ENCODE measurements at regions of chr7 and their contacts with region 1.

Region 1: DNA sequence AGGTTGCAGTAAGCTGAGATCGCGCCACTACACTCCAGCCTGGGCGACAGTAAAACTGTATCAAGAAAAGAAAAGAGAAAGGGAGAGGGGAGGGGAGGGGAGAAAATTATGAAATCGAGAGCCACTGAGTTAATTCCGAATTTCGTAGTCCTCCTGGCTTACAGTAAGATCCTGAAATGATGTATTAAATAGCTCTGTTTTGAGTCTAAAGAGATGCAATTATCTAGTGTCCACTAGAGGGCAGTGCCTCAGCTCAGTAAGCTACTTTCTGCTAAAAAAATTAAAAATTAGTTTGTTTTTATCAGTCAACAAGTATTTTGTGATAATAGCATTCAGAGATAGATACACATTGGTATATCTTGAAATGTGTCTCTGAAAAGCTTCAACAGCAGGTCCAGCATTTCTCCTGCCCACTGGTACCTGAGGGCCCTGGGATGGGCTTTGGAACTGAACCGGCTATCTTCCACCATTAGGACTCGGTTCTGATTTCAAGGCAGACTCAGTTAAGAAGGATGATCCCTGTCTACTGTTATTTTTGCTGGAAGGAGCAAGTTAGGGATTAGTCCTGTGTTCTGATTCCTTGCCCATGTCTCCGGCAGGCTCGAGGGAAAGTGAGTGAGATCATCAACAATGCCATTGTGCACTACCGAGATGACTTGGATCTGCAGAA is 19.5 kb downstream of the TSPAN33 start:
- DNase-seq: peak in 1 of 2 experiments; percentile 25
- H3K4me3 ChIP-seq: no peak overlapping the region
- H3K4me3 Mint-ChIP-seq: no peak overlapping the region
- H3K27ac Mint-ChIP-seq: no peak overlapping the region
- H3K4me1 ChIP-seq: no peaks in the 10 kb centered on the region
- H3K4me1 Mint-ChIP-seq: no peaks in the 10 kb centered on the region
- H3K27me3 ChIP-seq: no peaks in the 10 kb centered on the region
- H3K27me3 Mint-ChIP-seq: peaks cover 2% of the 10 kb centered on the region
- CTCF ChIP-seq: peak; percentile 74 to 85

Region 2: DNA sequence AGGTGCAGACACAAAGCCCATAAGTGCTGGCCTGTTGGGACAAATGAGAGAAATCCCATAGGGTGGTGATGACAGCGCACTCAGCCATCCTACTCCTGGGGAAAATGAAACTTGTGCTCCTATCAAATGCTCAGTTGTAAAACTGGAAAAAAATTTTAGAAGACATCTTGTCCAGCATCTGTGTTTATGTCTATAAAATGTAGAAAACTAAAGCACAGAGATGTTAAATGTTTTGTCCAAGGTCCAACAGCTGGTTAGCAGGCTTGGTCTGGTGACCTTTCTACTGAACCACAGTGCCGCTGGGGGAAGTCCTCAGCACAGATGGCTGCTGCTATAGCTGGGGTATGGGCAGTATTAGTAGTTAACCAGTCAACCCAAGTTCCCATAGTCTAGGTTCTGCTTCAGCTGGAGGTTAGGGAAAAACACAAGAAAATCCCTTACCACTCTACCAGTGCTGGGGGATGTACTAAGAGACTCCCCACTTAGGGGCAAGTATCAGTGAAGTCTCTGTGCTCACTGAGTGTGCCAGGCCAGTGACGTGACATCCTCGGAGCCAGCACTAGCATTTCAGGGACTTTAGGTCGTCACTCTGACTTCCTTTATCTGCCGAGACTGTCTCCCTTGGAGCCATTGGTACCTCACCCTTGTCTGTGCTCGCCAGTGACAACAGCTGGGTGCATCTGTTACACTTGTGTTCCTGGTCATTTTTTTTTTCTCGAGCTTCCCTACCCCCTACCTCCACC is 17.6 kb before region 1 on chr7:
- CTCF ChIA-PET with region 1: interaction called, 12 read pairs
- POLR2A ChIA-PET with region 1: no interaction called
- intact Hi-C with region 1: no loop called
- DNase-seq: no peak
- H3K4me3 ChIP-seq: no peak overlapping the region
- H3K4me3 Mint-ChIP-seq: no peak overlapping the region
- H3K27ac Mint-ChIP-seq: no peak overlapping the region
- H3K4me1 ChIP-seq: peaks cover 8% of the 10 kb centered on the region
- H3K4me1 Mint-ChIP-seq: peaks cover 4% of the 10 kb centered on the region
- H3K27me3 ChIP-seq: no peaks in the 10 kb centered on the region
- H3K27me3 Mint-ChIP-seq: peaks cover 28% of the 10 kb centered on the region
- CTCF ChIP-seq: no peak

Region 3: DNA sequence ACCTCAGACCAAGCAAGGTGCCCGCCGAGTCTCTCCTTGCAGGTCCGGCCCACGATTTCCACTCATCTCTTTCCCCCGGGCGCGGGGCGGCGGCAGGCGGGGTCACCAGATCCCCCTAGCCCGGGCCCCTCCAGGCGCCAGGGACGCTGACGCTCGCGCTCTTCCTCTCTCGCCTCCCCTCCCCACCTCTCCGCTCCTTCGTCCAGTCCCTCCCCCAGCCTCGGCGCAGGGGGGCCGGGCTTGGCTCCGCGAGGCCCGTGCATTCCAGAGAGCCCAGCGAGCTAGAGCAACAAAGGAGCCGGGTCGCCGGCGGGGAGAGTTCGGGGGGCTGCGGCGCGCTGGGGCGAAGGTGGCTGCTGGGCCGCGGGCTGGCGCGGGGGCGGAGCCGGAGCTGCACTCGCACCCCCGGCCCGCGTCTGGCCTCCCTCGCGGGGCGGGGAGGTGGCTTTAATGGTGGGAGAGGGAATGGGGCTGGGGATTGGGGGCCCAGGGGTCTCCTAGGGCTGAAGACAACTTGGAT is 24.4 kb after region 1 on chr7 and contains the start of gene SMO:
- CTCF ChIA-PET with region 1: interaction called, 12 read pairs
- POLR2A ChIA-PET with region 1: interaction called, 4 read pairs
- intact Hi-C with region 1: no loop called
- DNase-seq: peak; percentile 77 to 80
- H3K4me3 ChIP-seq: peak within 1 kb of the TSS; percentile 85
- H3K4me3 Mint-ChIP-seq: peak within 1 kb of the TSS; percentile 88
- H3K27ac Mint-ChIP-seq: peak within 1 kb of the TSS; percentile 81
- H3K4me1 ChIP-seq: peaks cover 24% of the 10 kb centered on the region
- H3K4me1 Mint-ChIP-seq: peaks cover 21% of the 10 kb centered on the region
- H3K27me3 ChIP-seq: no peaks in the 10 kb centered on the region
- H3K27me3 Mint-ChIP-seq: no peaks in the 10 kb centered on the region
- CTCF ChIP-seq: no peak
- total RNA-seq, gene SMO: 35.5 and 36.0 TPM in 2 replicates

Region 4: DNA sequence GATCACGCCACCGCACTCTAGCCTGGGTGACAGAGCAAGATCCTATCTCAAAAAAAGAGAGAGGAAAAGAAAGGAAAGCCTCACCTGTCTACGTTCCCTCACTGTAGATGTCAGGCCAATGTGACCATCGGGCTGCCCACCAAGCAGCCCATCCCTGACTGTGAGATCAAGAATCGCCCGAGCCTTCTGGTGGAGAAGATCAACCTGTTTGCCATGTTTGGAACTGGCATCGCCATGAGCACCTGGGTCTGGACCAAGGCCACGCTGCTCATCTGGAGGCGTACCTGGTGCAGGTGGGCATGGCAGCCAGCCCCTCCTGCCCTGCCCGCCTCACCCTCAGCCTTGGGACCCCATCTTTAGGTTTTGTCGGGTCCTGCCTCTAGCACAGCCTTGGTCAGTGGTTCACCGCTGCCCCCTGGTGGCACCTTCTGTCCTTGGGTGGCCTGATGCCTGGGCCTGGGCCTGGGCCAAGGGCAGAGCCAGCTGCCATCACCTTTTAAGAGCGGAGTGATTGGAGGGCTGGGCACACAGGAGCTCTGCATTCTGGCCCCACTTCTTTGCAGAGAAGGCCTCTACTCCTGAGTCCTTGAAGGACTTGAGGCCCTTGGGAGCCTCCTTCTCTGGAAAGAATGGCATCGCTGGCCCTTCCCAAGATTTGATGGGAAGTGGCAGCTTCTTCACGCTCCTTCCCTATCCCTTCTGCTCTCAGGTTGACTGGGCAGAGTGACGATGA is 46.4 kb after region 1 on chr7:
- CTCF ChIA-PET with region 1: interaction called, 101 read pairs
- POLR2A ChIA-PET with region 1: no interaction called
- intact Hi-C with region 1: loop called (anchors 1 kb)
- DNase-seq: peak; percentile 71 to 83
- H3K4me3 ChIP-seq: no peak overlapping the region
- H3K4me3 Mint-ChIP-seq: no peak overlapping the region
- H3K27ac Mint-ChIP-seq: no peak overlapping the region
- H3K4me1 ChIP-seq: no peaks in the 10 kb centered on the region
- H3K4me1 Mint-ChIP-seq: no peaks in the 10 kb centered on the region
- H3K27me3 ChIP-seq: no peaks in the 10 kb centered on the region
- H3K27me3 Mint-ChIP-seq: no peaks in the 10 kb centered on the region
- CTCF ChIP-seq: peak; percentile 87 to 94

Region 5: DNA sequence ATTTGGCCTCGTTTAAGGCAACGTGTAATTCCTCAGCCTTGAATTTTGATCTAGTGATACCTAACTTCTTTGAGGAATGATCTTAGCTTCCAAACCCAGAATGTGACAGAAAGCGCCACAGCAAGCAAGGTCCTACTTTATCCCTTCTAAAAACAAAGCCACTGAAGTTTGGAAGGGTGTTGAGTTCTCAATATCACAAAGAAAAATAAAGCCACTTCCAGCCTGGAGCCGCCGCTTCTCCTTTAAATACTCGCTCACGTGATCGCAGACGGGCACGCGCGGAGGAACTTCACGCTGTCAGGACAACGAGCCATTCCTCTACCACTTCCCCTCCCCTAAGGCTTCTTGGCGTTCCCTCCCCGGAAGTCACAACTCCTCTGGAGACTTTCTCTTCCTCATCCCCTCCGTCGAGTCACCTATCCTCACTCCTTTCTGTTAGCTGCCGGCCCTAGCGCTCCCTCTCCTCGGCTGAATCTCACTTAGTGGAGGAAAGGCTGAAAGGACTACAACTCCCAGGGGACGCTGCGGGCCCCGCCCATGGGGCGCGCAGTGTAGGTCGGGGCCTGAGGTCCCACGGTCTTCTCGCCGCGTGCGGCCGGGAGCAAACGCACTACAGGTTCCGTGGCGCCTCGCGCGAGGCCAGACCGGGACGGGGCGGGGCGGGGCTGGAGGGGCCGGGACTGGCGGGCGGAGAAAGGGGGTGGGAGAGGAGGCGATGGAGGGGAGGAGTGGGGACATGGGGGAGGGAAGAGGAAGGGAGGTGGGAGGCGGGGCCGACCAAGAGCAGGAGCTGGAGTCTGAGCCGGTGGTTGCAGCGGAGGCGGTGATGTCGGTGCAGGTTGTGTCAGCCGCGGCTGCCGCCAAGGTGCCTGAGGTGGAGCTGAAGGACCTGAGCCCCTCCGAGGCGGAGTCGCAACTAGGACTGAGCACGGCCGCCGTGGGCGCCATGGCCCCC is 60.5 kb after region 1 on chr7 and contains the start of gene AHCYL2:
- CTCF ChIA-PET with region 1: interaction called, 11 read pairs
- POLR2A ChIA-PET with region 1: no interaction called
- intact Hi-C with region 1: no loop called
- DNase-seq: peak; percentile 97 to 98
- H3K4me3 ChIP-seq: peak within 1 kb of the TSS; percentile 81
- H3K4me3 Mint-ChIP-seq: peak within 1 kb of the TSS; percentile 87
- H3K27ac Mint-ChIP-seq: peak within 1 kb of the TSS; percentile 86
- H3K4me1 ChIP-seq: 0 out of 2 replicates have a peak, but pooled peaks cover 9% of the 10 kb centered on the region
- H3K4me1 Mint-ChIP-seq: peaks cover 10% of the 10 kb centered on the region
- H3K27me3 ChIP-seq: no peaks in the 10 kb centered on the region
- H3K27me3 Mint-ChIP-seq: no peaks in the 10 kb centered on the region
- CTCF ChIP-seq: no peak
- total RNA-seq, gene AHCYL2: 15.8 and 17.2 TPM in 2 replicates